Ascending aorta (tissue), 2 donors: ENCODE measurements at regions of chr19 and their contacts with region 1.

Region 1: GRCh38 chr19:52527134-52527955 is at the start of gene ZNF808:
- DNase-seq: peak; percentile 83 to 98
- H3K4me3 ChIP-seq: peak within 1 kb of the TSS; percentile 74 to 86
- H3K27ac ChIP-seq: peak within 1 kb of the TSS; percentile 92 to 93
- H3K4me1 ChIP-seq: peaks cover 0 to 2% of the 10 kb centered on the region in 2 donors
- H3K27me3 ChIP-seq: no peaks in the 10 kb centered on the region
- CTCF ChIP-seq: peak; percentile 65 to 82 (median 71)
- total RNA-seq, gene ZNF808: 9.0 TPM

Region 2: GRCh38 chr19:52453324-52454094 is 73.8 kb before region 1 on chr19 and contains the start of gene ZNF578:
- intact Hi-C with region 1: loop called (anchors 2 kb)
- DNase-seq: peak in 1 of 2 donors; percentile 80
- H3K4me3 ChIP-seq: peak within 1 kb of the TSS; percentile 63 to 75
- H3K27ac ChIP-seq: no peak within 1 kb of the TSS
- H3K4me1 ChIP-seq: peaks cover 0 to 3% of the 10 kb centered on the region in 2 donors
- H3K27me3 ChIP-seq: no peaks in the 10 kb centered on the region
- CTCF ChIP-seq: no peak
- total RNA-seq, gene ZNF578: not detected

Region 3: GRCh38 chr19:52464798-52465470 is 62.4 kb before region 1 on chr19:
- intact Hi-C with region 1: no loop called
- DNase-seq: no peak
- H3K4me3 ChIP-seq: no peak overlapping the region
- H3K27ac ChIP-seq: no peak overlapping the region
- H3K4me1 ChIP-seq: no peaks in the 10 kb centered on the region
- H3K27me3 ChIP-seq: no peaks in the 10 kb centered on the region
- CTCF ChIP-seq: no peak

Region 4: DNA sequence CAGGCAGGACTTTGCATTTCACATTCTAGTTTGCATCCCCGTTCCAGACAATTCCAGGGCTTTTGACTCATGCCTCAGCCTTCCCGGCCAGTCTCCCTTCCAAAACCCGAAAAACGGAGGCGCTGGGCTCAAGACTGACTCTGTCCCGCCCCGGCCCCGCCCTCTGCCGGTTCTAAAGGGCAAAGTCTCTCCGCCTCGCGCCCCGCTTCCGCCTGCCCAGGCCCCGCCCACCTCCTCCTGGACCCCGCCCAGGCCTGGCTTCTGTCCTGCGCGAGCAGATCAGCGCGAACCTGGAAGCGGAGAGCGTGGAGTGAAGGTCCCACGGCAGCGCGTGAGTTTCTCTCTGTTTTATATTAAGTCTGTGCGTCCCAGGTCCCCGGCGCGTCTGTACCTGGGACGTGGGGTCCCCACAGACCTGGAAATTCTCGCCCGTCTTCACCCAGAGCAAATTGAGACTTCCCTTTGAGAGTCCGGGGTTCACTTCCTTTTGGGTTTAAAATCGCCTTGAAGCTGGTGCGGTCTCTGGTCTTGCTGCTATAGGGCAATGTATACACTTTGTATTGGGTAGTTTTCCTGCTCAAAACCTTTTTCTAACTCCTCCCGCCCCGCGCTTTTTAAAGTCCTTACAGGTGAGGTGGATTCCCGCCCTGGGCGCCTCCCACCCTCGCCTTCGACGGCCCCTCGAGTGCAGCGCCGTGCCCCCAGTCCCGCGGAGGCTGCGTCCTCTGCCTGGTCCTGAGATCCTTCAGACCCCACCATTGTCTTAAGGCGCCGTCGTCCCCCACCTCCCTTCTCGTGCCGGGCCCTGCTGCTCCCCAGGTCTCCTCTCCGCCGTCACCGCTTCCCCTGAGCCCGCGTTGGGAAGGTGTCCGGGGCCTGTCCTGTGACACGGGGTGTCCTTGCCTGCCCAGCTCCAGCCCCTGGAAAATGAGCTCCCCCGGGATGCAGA is 74.0 kb after region 1 on chr19:
- intact Hi-C with region 1: loop called (anchors 2 kb)
- DNase-seq: peak; percentile 82 to 98
- H3K4me3 ChIP-seq: peak overlapping the region; percentile 57 to 75
- H3K27ac ChIP-seq: peak overlapping the region; percentile 81 to 85
- H3K4me1 ChIP-seq: peaks cover 0 to 8% of the 10 kb centered on the region in 2 donors
- H3K27me3 ChIP-seq: no peaks in the 10 kb centered on the region
- CTCF ChIP-seq: peak; percentile 20 to 37 (median 35)

Region 5: DNA sequence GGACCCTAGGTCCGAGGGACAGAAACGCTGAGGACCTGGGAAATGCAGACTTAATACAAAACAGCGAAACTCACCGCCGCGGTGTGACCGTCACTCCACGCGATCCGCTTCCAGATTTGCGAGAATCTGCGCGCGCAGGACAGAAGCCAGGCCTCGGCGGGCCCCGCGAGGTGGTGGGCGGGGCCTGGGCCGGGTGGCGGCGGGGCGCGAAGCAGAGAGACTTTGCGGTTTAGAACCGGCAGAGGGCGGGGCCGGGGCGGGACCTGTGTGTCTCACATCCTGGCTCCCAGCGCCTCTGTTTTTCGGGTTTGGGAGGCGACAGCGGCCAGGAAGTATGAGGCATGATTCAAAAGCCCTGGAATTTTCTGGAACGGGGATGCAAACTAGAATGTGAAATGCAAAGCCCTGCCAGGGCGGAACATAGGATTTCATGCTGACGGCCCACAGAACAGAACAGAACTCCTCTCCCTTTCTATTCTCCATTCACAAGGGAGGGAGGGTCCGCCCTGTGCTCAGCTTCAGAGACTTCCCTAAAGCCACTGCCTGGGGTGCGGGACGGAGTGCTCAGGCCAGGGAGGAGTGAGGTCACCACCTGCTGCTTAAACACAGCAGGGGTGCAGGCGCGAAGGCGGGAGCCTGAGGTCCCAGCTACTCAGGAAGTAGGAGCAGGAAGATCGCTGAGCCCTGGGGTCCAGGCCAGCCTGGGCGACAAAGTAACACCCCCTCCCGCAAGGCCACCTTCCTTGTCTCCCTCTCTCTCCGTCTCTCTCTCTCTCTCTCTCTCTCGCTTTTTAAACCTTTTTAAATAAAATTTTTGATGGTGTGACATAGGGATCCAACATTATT is 163.2 kb after region 1 on chr19:
- intact Hi-C with region 1: loop called (anchors 1 kb)
- DNase-seq: peak; percentile 89 to 98
- H3K4me3 ChIP-seq: peak overlapping the region; percentile 56 to 89
- H3K27ac ChIP-seq: peak overlapping the region; percentile 95 to 98
- H3K4me1 ChIP-seq: peaks cover 3 to 28% of the 10 kb centered on the region in 2 donors
- H3K27me3 ChIP-seq: no peaks in the 10 kb centered on the region
- CTCF ChIP-seq: peak in 2 of 3 experiments; percentile 16 to 19

Region 6: DNA sequence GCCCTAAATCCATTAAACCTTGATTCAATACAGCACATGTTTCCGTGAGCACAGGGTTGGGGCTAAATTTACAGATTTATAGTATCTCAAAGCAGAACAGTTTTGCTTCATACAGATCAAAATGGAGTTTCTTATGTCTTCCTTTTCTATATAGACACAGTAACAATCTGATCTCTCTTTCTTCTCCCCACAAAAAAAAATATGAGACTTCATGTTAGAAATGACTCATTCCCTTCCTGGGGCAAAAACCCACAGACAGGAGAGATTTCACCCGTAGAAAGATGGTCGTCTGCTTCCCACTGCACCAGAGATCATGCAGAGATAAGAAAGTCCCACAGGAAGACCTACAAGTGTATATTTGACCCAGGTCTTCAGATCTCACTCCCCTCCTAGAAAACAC is 215.2 kb after region 1 on chr19:
- intact Hi-C with region 1: no loop called
- DNase-seq: no peak
- H3K4me3 ChIP-seq: no peak overlapping the region
- H3K27ac ChIP-seq: no peak overlapping the region
- H3K4me1 ChIP-seq: no peaks in the 10 kb centered on the region
- H3K27me3 ChIP-seq: no peaks in the 10 kb centered on the region
- CTCF ChIP-seq: no peak